ENCODE measurements at regions of chr14 and their contacts with region 1.

Region 1: GRCh38 chr14:22929104-22929847 is at the start of gene PRMT5:
- DNase-seq: peak; percentile 88
- ATAC-seq: peak; percentile 98
- H3K4me3 Mint-ChIP-seq: no peak within 1 kb of the TSS
- H3K27ac Mint-ChIP-seq: no peak within 1 kb of the TSS
- H3K4me1 Mint-ChIP-seq: peaks cover 25% of the 10 kb centered on the region
- H3K27me3 Mint-ChIP-seq: no peaks in the 10 kb centered on the region
- total RNA-seq, gene PRMT5: 35.7 to 40.1 TPM

Region 2: GRCh38 chr14:22918804-22919600 is 10.3 kb before region 1 on chr14 and contains the start of gene RBM23:
- POLR2A ChIA-PET with region 1: interaction called, 35 read pairs
- DNase-seq: peak; percentile 98
- ATAC-seq: peak; percentile 89
- H3K4me3 Mint-ChIP-seq: peak within 1 kb of the TSS; percentile 94
- H3K27ac Mint-ChIP-seq: peak within 1 kb of the TSS; percentile 99
- H3K4me1 Mint-ChIP-seq: peaks cover 24% of the 10 kb centered on the region
- H3K27me3 Mint-ChIP-seq: no peaks in the 10 kb centered on the region
- total RNA-seq, gene RBM23: 91.7 to 98.0 TPM

Region 3: GRCh38 chr14:22955702-22956569 is 26.7 kb after region 1 on chr14:
- POLR2A ChIA-PET with region 1: interaction called, 11 read pairs
- DNase-seq: no peak
- ATAC-seq: no peak
- H3K4me3 Mint-ChIP-seq: peak overlapping the region; percentile 89
- H3K27ac Mint-ChIP-seq: peak overlapping the region; percentile 90
- H3K4me1 Mint-ChIP-seq: peaks cover 17% of the 10 kb centered on the region
- H3K27me3 Mint-ChIP-seq: peaks cover 3% of the 10 kb centered on the region

Measured in activated naive CD8-positive, alpha-beta T cell treated with anti-CD3 and anti-CD28 coated beads, Interleukin-2, amount 10 ng/mL, durations not matched to agents 7 days and 5 days (primary cell).